Natural killer cell (primary cell): ENCODE measurements at regions of chr11 and their contacts with region 1.

Region 1: GRCh38 chr11:32176223-32176934 is 85.5 kb downstream of the RCN1 start:
- DNase-seq: peak; percentile 69 to 88
- ATAC-seq: peak; percentile 83 to 95 (median 88)
- H3K4me3 ChIP-seq: no peak overlapping the region
- H3K4me3 Mint-ChIP-seq: no peak overlapping the region
- H3K27ac ChIP-seq: no peak overlapping the region
- H3K27ac Mint-ChIP-seq: no peak overlapping the region
- H3K4me1 ChIP-seq: no peaks in the 10 kb centered on the region
- H3K4me1 Mint-ChIP-seq: peaks cover 0 to 6% of the 10 kb centered on the region in 2 donors
- H3K27me3 ChIP-seq: no peaks in the 10 kb centered on the region
- H3K27me3 Mint-ChIP-seq: peaks cover 20 to 22% of the 10 kb centered on the region in 2 donors
- CTCF ChIP-seq: peak; percentile 92

Region 2: DNA sequence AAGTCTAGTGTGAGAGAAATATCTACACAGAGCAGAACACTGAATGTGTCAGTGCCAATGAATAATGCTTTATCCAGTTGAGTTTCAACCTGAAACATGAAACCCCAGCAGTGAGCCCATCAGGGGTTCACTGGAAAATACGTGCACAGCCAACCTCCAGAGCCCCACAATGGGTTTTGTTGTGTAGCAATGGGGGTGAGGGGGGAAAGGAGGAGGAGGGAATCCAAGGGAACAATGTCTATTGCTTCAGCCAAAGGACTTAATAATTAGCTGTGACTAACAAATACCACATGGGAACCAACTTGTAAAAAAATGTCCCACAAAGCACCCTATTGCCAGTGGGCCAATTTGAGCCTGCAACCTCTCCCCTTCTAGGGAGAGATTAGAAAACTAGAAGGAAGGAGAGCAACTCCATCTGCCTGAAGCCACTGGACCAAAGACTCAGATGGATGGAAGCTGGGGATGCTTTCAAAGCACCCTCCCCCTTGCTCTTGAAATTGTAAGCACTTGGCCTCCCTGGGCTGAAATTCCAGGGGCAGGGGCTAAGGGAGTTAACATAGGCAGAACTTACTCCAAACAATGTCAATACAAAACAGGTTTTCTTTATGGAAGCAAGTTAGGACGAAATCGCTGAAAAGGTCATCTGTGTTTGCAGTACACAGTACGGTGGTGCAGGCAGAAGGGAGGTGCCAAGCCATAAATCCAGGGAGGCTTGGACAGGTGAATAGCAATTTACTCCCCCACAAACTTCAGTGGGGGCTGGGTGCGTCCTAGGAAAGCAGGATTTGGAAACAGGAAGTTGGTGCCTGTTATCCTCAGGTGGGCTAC is 1753.7 kb before region 1 on chr11:
- intact Hi-C with region 1: no loop called
- DNase-seq: no peak
- ATAC-seq: no peak
- H3K4me3 ChIP-seq: no peak overlapping the region
- H3K4me3 Mint-ChIP-seq: no peak overlapping the region
- H3K27ac ChIP-seq: no peak overlapping the region
- H3K27ac Mint-ChIP-seq: no peak overlapping the region
- H3K4me1 ChIP-seq: no peaks in the 10 kb centered on the region
- H3K4me1 Mint-ChIP-seq: no peaks in the 10 kb centered on the region
- H3K27me3 ChIP-seq: no peaks in the 10 kb centered on the region
- H3K27me3 Mint-ChIP-seq: peaks cover 0 to 5% of the 10 kb centered on the region in 2 donors
- CTCF ChIP-seq: no peak

Region 3: DNA sequence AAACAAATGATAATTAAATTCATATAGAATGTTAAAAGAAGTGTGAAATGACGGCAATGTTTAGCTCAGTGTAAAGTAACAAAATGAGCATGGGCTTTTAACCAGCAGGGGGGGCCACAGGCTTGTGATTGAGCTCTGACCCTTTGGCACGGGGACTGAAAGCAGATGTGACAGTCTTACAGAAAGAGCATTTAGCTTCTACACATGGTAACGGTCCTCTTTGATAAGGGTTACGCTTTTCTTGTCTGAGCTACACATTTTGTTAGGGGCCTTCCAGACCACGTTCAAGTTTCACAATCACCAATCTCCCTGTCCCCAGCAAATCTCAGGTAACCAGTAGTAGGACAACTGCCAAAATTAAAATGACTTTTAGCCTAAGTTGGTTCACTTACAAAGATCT is 1069.3 kb before region 1 on chr11:
- intact Hi-C with region 1: loop called (anchors 5 kb)
- DNase-seq: peak in 1 of 2 donors; percentile 57
- ATAC-seq: peak in 1 of 3 donors; percentile 41
- H3K4me3 ChIP-seq: no peak overlapping the region
- H3K4me3 Mint-ChIP-seq: no peak overlapping the region
- H3K27ac ChIP-seq: no peak overlapping the region
- H3K27ac Mint-ChIP-seq: no peak overlapping the region
- H3K4me1 ChIP-seq: no peaks in the 10 kb centered on the region
- H3K4me1 Mint-ChIP-seq: no peaks in the 10 kb centered on the region
- H3K27me3 ChIP-seq: no peaks in the 10 kb centered on the region
- H3K27me3 Mint-ChIP-seq: no peaks in the 10 kb centered on the region
- CTCF ChIP-seq: peak; percentile 35

Region 4: GRCh38 chr11:31236143-31236542 is 940.2 kb before region 1 on chr11:
- intact Hi-C with region 1: loop called (anchors 10 kb)
- DNase-seq: peak in 1 of 2 donors; percentile 4
- ATAC-seq: no peak
- H3K4me3 ChIP-seq: no peak overlapping the region
- H3K4me3 Mint-ChIP-seq: no peak overlapping the region
- H3K27ac ChIP-seq: no peak overlapping the region
- H3K27ac Mint-ChIP-seq: no peak overlapping the region
- H3K4me1 ChIP-seq: no peaks in the 10 kb centered on the region
- H3K4me1 Mint-ChIP-seq: no peaks in the 10 kb centered on the region
- H3K27me3 ChIP-seq: no peaks in the 10 kb centered on the region
- H3K27me3 Mint-ChIP-seq: no peaks in the 10 kb centered on the region
- CTCF ChIP-seq: no peak

Region 5: DNA sequence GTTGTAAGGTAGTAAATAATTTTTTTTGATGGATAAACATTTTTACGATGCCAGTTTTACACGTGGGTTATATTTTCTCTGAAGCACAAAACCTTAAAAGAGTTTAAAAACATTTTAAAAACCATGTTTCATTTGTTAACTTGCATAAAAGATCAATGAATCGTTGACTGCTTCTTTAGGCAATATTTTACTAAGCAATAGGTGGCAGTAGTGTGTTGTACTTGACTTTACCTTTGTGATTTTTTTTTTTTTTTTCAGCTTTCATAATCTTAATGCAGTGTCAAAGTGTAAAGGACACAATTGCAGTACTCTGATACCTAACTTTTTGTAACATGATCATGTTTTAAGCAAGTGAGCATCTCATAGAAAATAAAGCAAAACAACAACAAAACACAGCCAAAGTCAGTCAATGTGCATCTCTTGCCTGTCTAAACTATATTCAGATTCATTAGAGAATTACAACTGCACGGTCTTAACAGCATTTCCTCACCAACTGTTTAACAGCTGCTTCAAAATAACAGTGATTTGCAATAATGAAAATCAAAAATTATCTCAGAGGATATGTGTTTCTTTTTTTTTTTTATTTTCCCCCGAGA is 779.0 kb before region 1 on chr11:
- intact Hi-C with region 1: loop called (anchors 5 kb)
- DNase-seq: peak in 1 of 2 donors; percentile 45
- ATAC-seq: peak in 1 of 3 donors; percentile 53
- H3K4me3 ChIP-seq: no peak overlapping the region
- H3K4me3 Mint-ChIP-seq: no peak overlapping the region
- H3K27ac ChIP-seq: no peak overlapping the region
- H3K27ac Mint-ChIP-seq: no peak overlapping the region
- H3K4me1 ChIP-seq: no peaks in the 10 kb centered on the region
- H3K4me1 Mint-ChIP-seq: no peaks in the 10 kb centered on the region
- H3K27me3 ChIP-seq: no peaks in the 10 kb centered on the region
- H3K27me3 Mint-ChIP-seq: no peaks in the 10 kb centered on the region
- CTCF ChIP-seq: peak; percentile 62

Region 6: GRCh38 chr11:32052218-32052617 is 124.2 kb before region 1 on chr11:
- intact Hi-C with region 1: loop called (anchors 1 kb)
- DNase-seq: peak; percentile 35 to 76
- ATAC-seq: peak in 2 of 3 donors; percentile 61
- H3K4me3 ChIP-seq: no peak overlapping the region
- H3K4me3 Mint-ChIP-seq: no peak overlapping the region
- H3K27ac ChIP-seq: no peak overlapping the region
- H3K27ac Mint-ChIP-seq: no peak overlapping the region
- H3K4me1 ChIP-seq: peaks cover 2% of the 10 kb centered on the region
- H3K4me1 Mint-ChIP-seq: peaks cover 0 to 4% of the 10 kb centered on the region in 2 donors
- H3K27me3 ChIP-seq: no peaks in the 10 kb centered on the region
- H3K27me3 Mint-ChIP-seq: peaks cover 16 to 66% of the 10 kb centered on the region in 2 donors
- CTCF ChIP-seq: peak; percentile 88